PC-3 (cell line): ENCODE measurements at regions of chr6 and their contacts with region 1.

Region 1: DNA sequence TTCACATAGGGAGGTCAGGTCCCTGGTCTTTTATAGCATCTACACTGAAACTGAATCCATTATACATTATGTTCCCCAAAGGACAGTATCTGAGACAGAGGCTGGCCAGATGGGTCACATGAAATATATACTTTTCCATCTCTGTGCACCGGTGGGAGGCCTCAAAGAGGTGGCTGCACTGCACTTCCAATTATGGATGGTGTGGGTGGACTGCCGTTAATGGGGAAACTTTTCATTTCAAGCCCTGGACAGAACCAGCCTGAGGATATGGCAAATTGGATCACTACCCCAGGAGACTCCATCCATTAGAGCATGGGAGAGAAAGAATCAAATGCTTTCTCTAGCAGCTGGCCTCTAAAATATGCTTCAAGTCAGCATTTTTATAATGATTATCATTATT is 280.5 kb upstream of the OPRM1 start:
- DNase-seq: no peak
- ATAC-seq: no peak
- H3K4me3 ChIP-seq: no peak overlapping the region
- H3K27ac ChIP-seq: no peak overlapping the region
- H3K4me1 ChIP-seq: no peaks in the 10 kb centered on the region
- H3K27me3 ChIP-seq: peaks cover 12% of the 10 kb centered on the region
- CTCF ChIP-seq: no peak

Region 2: GRCh38 chr6:153872946-153873345 is 114.4 kb after region 1 on chr6:
- CTCF ChIA-PET with region 1: no interaction called
- POLR2A ChIA-PET with region 1: no interaction called
- intact Hi-C with region 1: no loop called
- DNase-seq: no peak
- ATAC-seq: no peak
- H3K4me3 ChIP-seq: no peak overlapping the region
- H3K27ac ChIP-seq: no peak overlapping the region
- H3K4me1 ChIP-seq: no peaks in the 10 kb centered on the region
- H3K27me3 ChIP-seq: peaks cover 9% of the 10 kb centered on the region; the same call in 1 of the 2 replicates
- CTCF ChIP-seq: no peak

Region 3: GRCh38 chr6:154001494-154002285 is 243.2 kb after region 1 on chr6:
- CTCF ChIA-PET with region 1: no interaction called
- POLR2A ChIA-PET with region 1: interaction called, 19 read pairs
- intact Hi-C with region 1: no loop called
- DNase-seq: no peak
- ATAC-seq: no peak
- H3K4me3 ChIP-seq: no peak overlapping the region
- H3K27ac ChIP-seq: no peak overlapping the region
- H3K4me1 ChIP-seq: no peaks in the 10 kb centered on the region
- H3K27me3 ChIP-seq: peaks cover 1% of the 10 kb centered on the region; the same call in 1 of the 2 replicates
- CTCF ChIP-seq: no peak